GM10248 (cell line): ENCODE measurements at regions of chr12 and their contacts with region 1.

Region 1: GRCh38 chr12:53065975-53066931 is 12.9 kb downstream of the SPRYD3 start:
- DNase-seq: peak; percentile 86
- CTCF ChIP-seq: peak; percentile 90

Region 2: GRCh38 chr12:53036802-53037201 is 29.5 kb before region 1 on chr12:
- CTCF ChIA-PET with region 1: interaction called, 264 read pairs
- POLR2A ChIA-PET with region 1: no interaction called
- DNase-seq: no peak
- CTCF ChIP-seq: no peak

Region 3: GRCh38 chr12:53079226-53080117 is 13.2 kb after region 1 on chr12 and contains the start of gene SPRYD3:
- CTCF ChIA-PET with region 1: interaction called, 141 read pairs
- POLR2A ChIA-PET with region 1: interaction called, 9 read pairs
- DNase-seq: peak; percentile 100
- CTCF ChIP-seq: no peak

Region 4: GRCh38 chr12:53174881-53175491 is 108.7 kb after region 1 on chr12:
- CTCF ChIA-PET with region 1: interaction called, 13 read pairs
- POLR2A ChIA-PET with region 1: no interaction called
- DNase-seq: peak; percentile 24
- CTCF ChIP-seq: peak; percentile 18

Region 5: DNA sequence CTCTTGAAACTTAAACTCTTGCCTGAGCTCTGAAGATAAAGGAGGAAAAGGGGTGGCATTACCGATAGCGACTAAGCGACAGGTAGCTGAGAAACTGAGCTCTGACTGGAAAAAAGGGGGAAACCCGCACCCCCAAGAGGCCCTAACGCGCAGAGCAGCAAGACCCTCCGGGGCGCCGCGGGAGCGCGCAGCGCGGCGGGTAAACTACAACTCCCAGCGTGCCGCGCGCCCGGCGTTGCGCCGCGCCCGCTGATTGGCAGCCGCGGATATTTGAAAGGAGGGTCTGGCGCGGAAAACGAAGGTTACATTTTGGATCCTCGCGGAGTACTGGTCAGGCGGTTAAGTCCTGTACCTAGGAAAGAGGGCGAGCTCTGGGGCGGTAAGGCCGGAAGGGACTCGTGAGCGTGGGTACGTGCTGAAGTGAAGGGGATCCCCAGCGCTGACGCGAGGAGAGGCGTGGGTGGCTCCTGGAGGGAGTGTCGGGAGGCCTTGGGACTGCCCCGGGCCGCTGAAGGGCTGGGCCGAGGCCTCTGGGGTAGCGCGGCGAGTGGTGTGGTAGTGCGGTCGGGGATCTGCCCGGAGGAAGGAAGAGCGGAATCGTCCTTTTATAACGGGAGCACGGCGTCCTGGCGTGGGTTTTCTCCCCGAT is 201.9 kb after region 1 on chr12 and contains the start of gene ESPL1:
- CTCF ChIA-PET with region 1: interaction called, 18 read pairs
- POLR2A ChIA-PET with region 1: no interaction called
- DNase-seq: peak; percentile 92
- CTCF ChIP-seq: peak; percentile 39